Heart right ventricle (tissue), 16 donors: ENCODE measurements at regions of chr2 and their contacts with region 1.

Region 1: DNA sequence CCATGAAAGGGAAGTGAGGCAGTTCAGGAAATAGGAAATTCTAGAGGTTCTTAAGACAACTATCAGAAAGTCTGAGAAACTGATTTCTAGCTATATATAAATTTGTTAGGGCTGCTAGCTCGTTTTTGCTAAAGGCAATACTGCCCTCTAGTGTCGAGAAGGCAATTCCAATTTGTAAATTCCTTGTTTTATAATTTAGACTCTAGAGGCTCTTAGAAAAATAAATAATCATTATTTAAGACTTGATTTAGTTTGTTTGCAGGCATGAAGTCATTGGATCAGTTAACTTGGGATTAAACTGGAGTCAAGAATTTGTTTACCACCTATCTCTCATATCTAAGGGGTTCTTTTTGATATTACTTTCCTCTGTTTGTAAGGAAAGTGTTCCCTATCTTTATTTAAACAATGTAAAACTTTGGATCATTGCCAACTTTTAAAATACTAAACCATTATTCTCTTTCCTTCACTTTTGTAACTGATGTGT is 66.2 kb downstream of the ACVR2A start:
- DNase-seq: peak in 1 of 2 donors; percentile 47
- ATAC-seq: peak in 4 of 8 donors; percentile 20 to 49 (median 39)
- H3K4me3 ChIP-seq: no peak overlapping the region
- H3K27ac ChIP-seq: peak overlapping the region in 1 of 10 donors; percentile 23
- H3K4me1 ChIP-seq: peaks cover 0 to 27% (median 10%) of the 10 kb centered on the region in 9 donors
- H3K27me3 ChIP-seq: no peaks in the 10 kb centered on the region
- CTCF ChIP-seq: peak; percentile 69 to 91 (median 82)

Region 2: GRCh38 chr2:146734042-146734820 is 1176.8 kb before region 1 on chr2:
- intact Hi-C with region 1: loop called in 7 of 10 experiments (anchors 5 to 10 kb)
- DNase-seq: no peak
- ATAC-seq: peak in 1 of 8 donors; percentile 48
- H3K4me3 ChIP-seq: no peak overlapping the region
- H3K27ac ChIP-seq: no peak overlapping the region
- H3K4me1 ChIP-seq: peaks cover 0 to 3% (median 0%) of the 10 kb centered on the region in 9 donors
- H3K27me3 ChIP-seq: peaks cover 0 to 10% (median 0%) of the 10 kb centered on the region in 7 donors
- CTCF ChIP-seq: peak; percentile 8 to 61 (median 52)

Region 3: DNA sequence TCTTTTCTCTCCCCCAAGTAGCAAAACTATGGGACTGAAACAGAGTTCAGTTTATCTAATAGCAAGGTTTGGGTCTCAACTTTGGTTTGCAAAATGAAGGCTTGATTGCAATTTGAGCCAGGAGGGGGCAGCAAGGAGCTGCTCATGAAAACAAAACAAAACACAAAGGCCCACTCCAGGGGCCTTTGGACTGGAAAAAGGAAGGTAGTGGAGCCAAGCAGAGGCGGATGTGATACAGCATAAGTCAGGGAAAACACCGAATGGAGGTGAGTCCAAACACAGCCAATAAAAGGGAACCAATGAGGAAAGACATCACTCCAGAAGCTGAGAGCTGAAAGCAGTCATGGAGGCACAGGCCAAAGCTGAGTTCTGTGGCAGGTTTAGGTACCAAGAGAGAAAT is 865.9 kb before region 1 on chr2:
- intact Hi-C with region 1: loop called in 3 of 10 experiments (anchors 5 to 10 kb)
- DNase-seq: peak in 1 of 2 donors; percentile 17
- ATAC-seq: peak in 1 of 8 donors; percentile 33
- H3K4me3 ChIP-seq: no peak overlapping the region
- H3K27ac ChIP-seq: no peak overlapping the region
- H3K4me1 ChIP-seq: no peaks in the 10 kb centered on the region
- H3K27me3 ChIP-seq: no peaks in the 10 kb centered on the region
- CTCF ChIP-seq: peak in 8 of 9 donors; percentile 40 to 69 (median 61)

Region 4: GRCh38 chr2:147082850-147083522 is 828.0 kb before region 1 on chr2:
- intact Hi-C with region 1: loop called (anchors 1 to 10 kb)
- DNase-seq: peak in 1 of 2 donors; percentile 55
- ATAC-seq: peak in 5 of 8 donors; percentile 38 to 69 (median 42)
- H3K4me3 ChIP-seq: no peak overlapping the region
- H3K27ac ChIP-seq: no peak overlapping the region
- H3K4me1 ChIP-seq: peaks cover 0 to 18% (median 0%) of the 10 kb centered on the region in 9 donors
- H3K27me3 ChIP-seq: no peaks in the 10 kb centered on the region
- CTCF ChIP-seq: peak; percentile 62 to 89 (median 84)

Region 5: GRCh38 chr2:147554521-147555107 is 356.4 kb before region 1 on chr2:
- intact Hi-C with region 1: no loop called
- DNase-seq: peak; percentile 34 to 36
- ATAC-seq: peak; percentile 44 to 85 (median 79)
- H3K4me3 ChIP-seq: no peak overlapping the region
- H3K27ac ChIP-seq: peak overlapping the region in 8 of 10 donors; percentile 0 to 74 (median 58)
- H3K4me1 ChIP-seq: peaks cover 0 to 27% (median 11%) of the 10 kb centered on the region in 9 donors
- H3K27me3 ChIP-seq: no peaks in the 10 kb centered on the region
- CTCF ChIP-seq: no peak

Region 6: DNA sequence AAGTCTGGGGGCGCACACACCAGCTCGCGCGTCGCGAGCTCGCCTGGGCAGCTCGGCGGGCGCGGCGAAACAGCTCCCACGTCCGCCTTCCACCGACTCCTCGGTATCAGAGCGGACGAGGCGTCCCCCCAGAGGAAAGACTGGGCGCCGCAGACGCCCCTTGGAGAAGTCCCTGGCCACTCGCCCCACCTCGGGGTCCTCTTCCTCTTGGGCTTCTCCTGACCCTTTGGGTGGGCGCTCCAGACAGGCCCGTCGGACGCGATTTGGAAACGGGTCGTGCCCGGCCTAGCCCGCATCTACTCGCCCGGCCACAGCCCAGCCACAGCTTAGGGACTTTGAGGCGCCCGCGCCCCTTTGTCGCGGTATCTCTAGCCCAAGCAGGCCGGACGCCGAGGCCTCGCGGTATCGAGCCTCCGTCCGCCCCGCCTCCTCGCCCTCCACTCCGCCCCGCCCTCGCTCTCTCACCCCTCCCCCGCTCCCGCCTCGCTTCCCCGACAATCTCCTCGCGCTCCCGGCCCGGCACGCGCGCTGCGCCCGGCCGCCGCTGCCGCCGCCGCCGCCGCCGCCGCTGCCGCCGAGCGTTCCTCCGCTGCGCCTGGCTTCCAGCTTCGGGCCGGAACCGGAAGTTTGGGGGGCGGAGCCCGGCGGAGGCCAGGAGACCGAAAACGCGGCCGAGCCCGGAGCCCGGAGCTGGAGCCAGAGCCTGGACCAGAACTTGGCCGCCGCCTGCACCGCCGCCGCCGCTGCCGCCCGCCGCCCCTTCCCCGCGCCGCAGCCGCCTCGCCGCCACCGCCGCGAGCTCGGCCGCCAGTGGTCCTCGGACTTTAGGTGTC is 67.0 kb before region 1 on chr2:
- intact Hi-C with region 1: loop called in 3 of 10 experiments (anchors 2 to 5 kb)
- DNase-seq: peak; percentile 92 to 94
- ATAC-seq: peak; percentile 92 to 98 (median 96)
- H3K4me3 ChIP-seq: peak overlapping the region; percentile 73 to 92 (median 84)
- H3K27ac ChIP-seq: peak overlapping the region; percentile 91 to 99 (median 97)
- H3K4me1 ChIP-seq: peaks cover 0 to 47% (median 32%) of the 10 kb centered on the region in 9 donors
- H3K27me3 ChIP-seq: peaks cover 0 to 9% (median 0%) of the 10 kb centered on the region in 7 donors
- CTCF ChIP-seq: peak in 6 of 9 donors; percentile 4 to 52 (median 42)